ENCODE measurements at regions of chr1 and their contacts with region 1.

Region 1: DNA sequence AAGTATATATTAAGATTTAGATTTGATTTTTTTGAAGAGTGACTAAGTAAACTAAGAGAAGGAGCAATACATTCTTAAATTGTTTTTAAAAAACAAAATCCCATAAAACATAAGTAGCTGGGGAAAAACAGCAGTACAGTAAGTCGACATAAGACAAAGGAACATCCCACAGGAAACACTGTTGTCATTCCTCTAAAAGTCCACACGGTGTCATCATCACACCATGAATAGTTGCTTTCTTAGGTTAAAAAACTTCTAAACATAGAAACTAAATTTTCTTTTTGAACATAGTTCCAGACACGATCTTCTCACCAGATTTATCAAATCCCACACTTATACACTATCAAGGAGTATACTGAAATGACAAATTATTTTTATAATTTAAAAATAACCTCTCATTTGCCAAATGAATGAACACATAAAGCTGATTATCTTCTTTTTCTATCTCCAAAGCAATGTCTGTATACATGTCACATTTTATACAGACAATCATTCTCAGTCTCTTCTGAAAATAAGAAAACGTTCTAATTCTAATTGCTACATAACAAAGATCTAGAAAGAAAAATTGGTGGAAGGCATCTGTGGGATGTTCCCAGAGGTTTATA is 15.8 kb downstream of the ODF2L start:
- DNase-seq: peak; percentile 74 to 85 (median 82)
- H3K4me3 ChIP-seq: no peak overlapping the region
- H3K27ac ChIP-seq: no peak overlapping the region
- H3K4me1 ChIP-seq: peaks cover 0 to 4% (median 4%) of the 10 kb centered on the region in 4 experiments
- H3K27me3 ChIP-seq: no peaks in the 10 kb centered on the region

Region 2: DNA sequence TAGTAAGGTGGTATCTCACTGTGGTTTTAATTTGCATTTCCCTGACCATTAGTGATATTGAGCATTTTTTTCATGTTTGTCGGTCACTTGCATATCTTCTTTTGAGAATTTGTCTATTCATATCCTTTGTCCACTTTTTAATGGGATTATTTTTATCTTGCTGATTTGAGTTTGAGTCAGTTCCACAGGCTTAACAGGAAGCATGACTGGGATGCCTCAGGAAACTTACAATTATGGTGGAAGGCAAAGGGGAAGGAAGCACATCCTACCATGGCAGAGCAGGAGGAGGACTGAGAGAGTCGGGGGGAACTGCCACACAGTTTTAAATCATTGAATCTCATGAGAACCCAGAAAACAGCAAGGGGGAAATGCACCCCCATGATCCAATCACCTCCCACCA is 35.3 kb before region 1 on chr1:
- CTCF ChIA-PET with region 1: no interaction called
- POLR2A ChIA-PET with region 1: no interaction called
- DNase-seq: no peak
- H3K4me3 ChIP-seq: no peak overlapping the region
- H3K27ac ChIP-seq: no peak overlapping the region
- H3K4me1 ChIP-seq: no peaks in the 10 kb centered on the region
- H3K27me3 ChIP-seq: no peaks in the 10 kb centered on the region

Region 3: GRCh38 chr1:86441581-86441980 is 61.2 kb after region 1 on chr1:
- CTCF ChIA-PET with region 1: no interaction called
- POLR2A ChIA-PET with region 1: no interaction called
- DNase-seq: peak; percentile 32 to 89 (median 86)
- H3K4me3 ChIP-seq: no peak overlapping the region
- H3K27ac ChIP-seq: no peak overlapping the region
- H3K4me1 ChIP-seq: peaks cover 0 to 10% (median 5%) of the 10 kb centered on the region in 4 experiments
- H3K27me3 ChIP-seq: no peaks in the 10 kb centered on the region

Region 4: GRCh38 chr1:86507935-86508582 is 127.7 kb after region 1 on chr1:
- CTCF ChIA-PET with region 1: interaction called, 17 read pairs
- POLR2A ChIA-PET with region 1: no interaction called
- DNase-seq: peak; percentile 45 to 67 (median 65)
- H3K4me3 ChIP-seq: peak overlapping the region in 1 of 7 experiments; percentile 18
- H3K27ac ChIP-seq: no peak overlapping the region
- H3K4me1 ChIP-seq: peaks cover 0 to 14% (median 12%) of the 10 kb centered on the region in 4 experiments
- H3K27me3 ChIP-seq: no peaks in the 10 kb centered on the region

Measured in common myeloid progenitor, CD34-positive (primary cell).